Activated CD4-positive, alpha-beta T cell treated with anti-CD3 and anti-CD28 coated beads, Interleukin-2, amount 10 ng/mL, durations not matched to agents 24 days and 14 days (primary cell): ENCODE measurements at regions of chr2 and their contacts with region 1.

Region 1: GRCh38 chr2:95389245-95390119 is 13.0 kb upstream of the FAHD2A start:
- DNase-seq: peak; percentile 87
- H3K4me3 Mint-ChIP-seq: no peak overlapping the region
- H3K27ac Mint-ChIP-seq: no peak overlapping the region
- H3K4me1 Mint-ChIP-seq: peaks cover 4% of the 10 kb centered on the region
- H3K27me3 Mint-ChIP-seq: no peaks in the 10 kb centered on the region

Region 2: GRCh38 chr2:95345566-95346230 is 43.8 kb before region 1 on chr2:
- intact Hi-C with region 1: no loop called
- DNase-seq: peak; percentile 90
- H3K4me3 Mint-ChIP-seq: peak overlapping the region; percentile 84
- H3K27ac Mint-ChIP-seq: no peak overlapping the region
- H3K4me1 Mint-ChIP-seq: peaks cover 6% of the 10 kb centered on the region
- H3K27me3 Mint-ChIP-seq: peaks cover 48% of the 10 kb centered on the region

Region 3: DNA sequence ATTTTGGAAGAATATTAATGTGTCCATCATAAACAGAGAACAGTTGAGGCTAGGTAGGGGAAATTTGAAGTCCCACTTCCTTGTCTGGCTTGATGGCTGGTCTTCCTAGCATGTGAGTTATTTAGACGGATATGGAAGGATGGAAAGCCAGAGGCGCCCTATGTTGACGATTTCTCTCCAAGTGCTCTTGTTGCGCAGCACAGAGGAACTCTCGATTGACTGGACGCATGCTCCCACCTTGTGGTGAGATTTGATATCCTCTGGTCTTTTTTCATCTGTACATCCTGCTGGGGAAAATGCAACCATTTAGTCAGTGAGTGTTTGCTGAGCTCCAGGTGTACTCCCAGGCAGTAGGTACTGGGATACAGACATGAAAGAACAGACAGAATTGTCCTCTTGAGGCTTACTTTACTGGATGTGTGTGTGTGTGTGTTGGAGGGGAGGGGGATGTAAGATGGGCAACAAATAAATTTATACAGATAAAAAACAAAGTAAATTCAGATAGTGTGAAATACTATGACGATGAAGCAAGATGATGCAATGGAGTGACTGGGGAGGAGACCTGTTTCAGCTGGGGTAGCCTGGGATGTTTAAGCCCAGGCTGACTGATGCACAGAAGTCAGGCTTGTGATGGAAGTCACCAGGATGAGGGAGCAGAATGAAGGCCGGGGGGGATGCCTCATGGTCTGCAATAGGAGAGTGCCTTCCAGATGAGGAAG is 339.6 kb after region 1 on chr2:
- intact Hi-C with region 1: loop called (anchors 2 kb)
- DNase-seq: peak; percentile 82
- H3K4me3 Mint-ChIP-seq: no peak overlapping the region
- H3K27ac Mint-ChIP-seq: no peak overlapping the region
- H3K4me1 Mint-ChIP-seq: peaks cover 1% of the 10 kb centered on the region
- H3K27me3 Mint-ChIP-seq: peaks cover 10% of the 10 kb centered on the region